Activated T-helper 1 cell treated with anti-CD3 and anti-CD28 coated beads, Interleukin-12 subunit alpha, Interleukin-12 subunit beta, Interleukin-2, Interleukin-4 antibody, amounts not matched to agents 30 ng/mL and 10 ng/mL and 1 ng/mL, durations not matched to agents 14 hours and 24 hours and 36 hours (primary cell): ENCODE measurements at regions of chr18 and their contacts with region 1.

Region 1: DNA sequence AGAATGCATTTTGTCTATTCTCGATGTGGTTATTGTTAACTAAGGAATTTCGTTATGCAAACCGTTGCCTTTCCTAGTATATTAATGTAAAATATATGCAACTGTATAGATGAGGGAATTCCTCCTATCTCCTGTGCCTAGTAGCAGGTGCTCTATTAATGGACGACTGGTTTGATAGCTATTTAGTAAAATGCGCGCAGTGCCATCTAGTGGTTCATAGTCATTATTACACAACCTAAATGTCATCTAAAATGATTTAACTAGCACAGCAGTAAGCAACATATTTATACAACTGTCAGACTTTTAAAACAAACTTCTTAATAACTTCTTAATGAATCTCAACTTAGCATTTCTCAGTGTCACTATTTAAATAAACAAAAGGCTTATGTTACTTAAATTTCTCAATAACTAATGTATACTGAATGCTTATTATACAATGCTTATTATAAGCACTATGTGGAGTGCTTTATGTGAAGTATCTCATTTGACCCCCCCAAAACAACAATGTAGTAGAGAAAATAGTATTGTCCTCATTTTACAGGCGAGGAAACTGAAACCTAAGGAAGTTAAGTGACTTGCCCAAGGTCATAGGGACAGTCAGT is 77.9 kb downstream of the DTNA start:
- DNase-seq: no peak
- H3K4me3 Mint-ChIP-seq: no peak overlapping the region
- H3K27ac Mint-ChIP-seq: no peak overlapping the region
- H3K4me1 Mint-ChIP-seq: peaks cover 4% of the 10 kb centered on the region
- H3K27me3 Mint-ChIP-seq: peaks cover 4% of the 10 kb centered on the region

Region 2: DNA sequence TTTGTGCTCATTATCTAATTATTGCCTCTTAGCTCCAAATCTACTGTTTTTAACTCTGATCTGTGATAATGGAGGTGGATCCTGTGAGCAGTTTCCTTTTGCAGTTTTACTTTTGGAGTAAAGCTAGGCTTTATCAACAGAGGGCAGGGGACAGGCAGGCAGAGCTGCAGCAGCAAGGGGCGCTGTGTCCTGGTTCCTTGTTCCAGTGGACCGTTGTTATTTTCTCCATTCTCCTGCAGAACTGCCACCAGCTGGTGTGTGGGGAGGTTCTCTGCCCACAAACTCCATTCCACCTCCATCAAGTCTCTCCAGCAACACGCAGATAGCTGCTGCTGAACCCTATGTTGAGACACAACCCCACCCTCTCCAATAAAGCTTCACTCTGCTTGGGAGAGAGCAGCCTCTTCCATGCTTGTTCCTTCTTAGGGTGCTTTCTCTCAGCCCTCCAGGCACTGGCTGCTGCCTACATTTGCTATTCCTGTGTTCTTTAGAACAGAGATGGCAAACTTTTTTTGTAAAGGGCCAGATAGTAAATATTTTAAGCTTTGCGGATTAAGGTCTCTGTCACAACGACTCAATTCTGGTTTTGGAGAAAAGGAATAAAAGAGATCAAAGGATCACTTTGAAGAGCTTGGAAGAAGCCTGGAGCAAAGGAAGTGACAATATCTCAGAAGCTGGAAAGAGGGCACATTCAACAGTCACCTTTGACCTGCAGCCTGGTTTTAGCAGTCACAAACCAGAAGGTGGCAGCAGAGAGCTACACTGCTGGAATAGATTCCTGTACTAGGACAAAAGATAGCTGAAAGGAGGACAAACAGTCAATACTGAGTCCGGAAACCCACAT is 1556.3 kb before region 1 on chr18:
- intact Hi-C with region 1: loop called (anchors 5 kb)
- DNase-seq: peak; percentile 38
- H3K4me3 Mint-ChIP-seq: no peak overlapping the region
- H3K27ac Mint-ChIP-seq: no peak overlapping the region
- H3K4me1 Mint-ChIP-seq: no peaks in the 10 kb centered on the region
- H3K27me3 Mint-ChIP-seq: no peaks in the 10 kb centered on the region

Region 3: DNA sequence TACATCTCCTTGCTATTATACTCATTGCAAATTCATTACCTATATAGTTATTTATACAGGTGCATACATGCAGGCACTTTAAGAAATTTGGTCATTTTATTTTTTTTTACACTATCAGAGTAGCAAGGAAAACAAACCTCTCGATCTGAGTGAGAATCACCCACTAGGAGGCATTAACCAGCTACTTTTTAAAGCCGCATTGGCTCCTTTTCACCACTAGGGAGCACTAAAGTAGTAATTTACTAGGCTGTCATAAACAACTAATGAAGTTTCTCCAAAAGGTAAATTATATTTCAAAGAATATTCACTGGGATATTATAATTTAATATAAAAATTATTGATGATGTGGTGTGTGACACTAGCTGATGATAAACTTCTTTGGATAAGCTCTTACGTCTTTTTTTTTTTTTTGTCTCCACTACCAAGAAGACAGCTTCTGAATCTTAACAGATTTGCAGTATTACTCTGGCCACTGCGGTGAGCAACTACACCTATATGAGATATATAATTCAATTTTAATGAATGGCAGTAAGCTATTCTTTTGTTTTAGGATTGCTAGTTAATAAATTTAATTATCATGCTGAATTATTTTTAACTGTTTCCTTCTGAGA is 665.2 kb before region 1 on chr18:
- intact Hi-C with region 1: loop called (anchors 1 kb)
- DNase-seq: no peak
- H3K4me3 Mint-ChIP-seq: no peak overlapping the region
- H3K27ac Mint-ChIP-seq: no peak overlapping the region
- H3K4me1 Mint-ChIP-seq: no peaks in the 10 kb centered on the region
- H3K27me3 Mint-ChIP-seq: no peaks in the 10 kb centered on the region

Region 4: GRCh38 chr18:34458410-34458977 is 329.5 kb before region 1 on chr18:
- intact Hi-C with region 1: no loop called
- DNase-seq: no peak
- H3K4me3 Mint-ChIP-seq: no peak overlapping the region
- H3K27ac Mint-ChIP-seq: no peak overlapping the region
- H3K4me1 Mint-ChIP-seq: no peaks in the 10 kb centered on the region
- H3K27me3 Mint-ChIP-seq: no peaks in the 10 kb centered on the region

Region 5: GRCh38 chr18:34661464-34662111 is 126.4 kb before region 1 on chr18:
- intact Hi-C with region 1: loop called (anchors 1 kb)
- DNase-seq: no peak
- H3K4me3 Mint-ChIP-seq: no peak overlapping the region
- H3K27ac Mint-ChIP-seq: no peak overlapping the region
- H3K4me1 Mint-ChIP-seq: no peaks in the 10 kb centered on the region
- H3K27me3 Mint-ChIP-seq: no peaks in the 10 kb centered on the region

Region 6: DNA sequence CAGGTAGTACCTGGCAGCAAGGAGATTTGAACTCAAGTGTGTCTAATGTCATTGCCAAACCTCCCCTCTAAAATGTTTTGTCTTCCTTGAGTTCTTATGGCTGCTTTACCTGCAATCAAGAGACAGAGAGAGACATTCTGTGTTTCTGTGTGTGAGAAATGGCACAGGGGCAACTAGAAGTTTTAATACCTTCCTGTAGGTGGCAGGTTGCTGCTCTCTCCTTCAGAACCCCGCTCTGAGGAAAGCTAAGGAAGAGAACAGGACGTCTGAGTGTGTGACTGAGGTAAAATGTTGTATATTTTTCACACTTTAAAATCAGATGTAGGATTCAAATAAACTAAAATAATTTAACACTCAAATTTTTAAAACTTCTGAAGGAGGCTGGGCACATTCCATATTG is 58.8 kb before region 1 on chr18:
- intact Hi-C with region 1: loop called (anchors 2 kb)
- DNase-seq: no peak
- H3K4me3 Mint-ChIP-seq: no peak overlapping the region
- H3K27ac Mint-ChIP-seq: no peak overlapping the region
- H3K4me1 Mint-ChIP-seq: no peaks in the 10 kb centered on the region
- H3K27me3 Mint-ChIP-seq: no peaks in the 10 kb centered on the region

Region 7: GRCh38 chr18:34834897-34835296 is 46.9 kb after region 1 on chr18:
- intact Hi-C with region 1: no loop called
- DNase-seq: no peak
- H3K4me3 Mint-ChIP-seq: no peak overlapping the region
- H3K27ac Mint-ChIP-seq: peak overlapping the region; percentile 4
- H3K4me1 Mint-ChIP-seq: peaks cover 14% of the 10 kb centered on the region
- H3K27me3 Mint-ChIP-seq: no peaks in the 10 kb centered on the region

Region 8: GRCh38 chr18:34929336-34929780 is 141.3 kb after region 1 on chr18:
- intact Hi-C with region 1: no loop called
- DNase-seq: no peak
- H3K4me3 Mint-ChIP-seq: no peak overlapping the region
- H3K27ac Mint-ChIP-seq: no peak overlapping the region
- H3K4me1 Mint-ChIP-seq: no peaks in the 10 kb centered on the region
- H3K27me3 Mint-ChIP-seq: peaks cover 5% of the 10 kb centered on the region